CD8-positive, alpha-beta T cell (primary cell): ENCODE measurements at regions of chr6 and their contacts with region 1.

Region 1: DNA sequence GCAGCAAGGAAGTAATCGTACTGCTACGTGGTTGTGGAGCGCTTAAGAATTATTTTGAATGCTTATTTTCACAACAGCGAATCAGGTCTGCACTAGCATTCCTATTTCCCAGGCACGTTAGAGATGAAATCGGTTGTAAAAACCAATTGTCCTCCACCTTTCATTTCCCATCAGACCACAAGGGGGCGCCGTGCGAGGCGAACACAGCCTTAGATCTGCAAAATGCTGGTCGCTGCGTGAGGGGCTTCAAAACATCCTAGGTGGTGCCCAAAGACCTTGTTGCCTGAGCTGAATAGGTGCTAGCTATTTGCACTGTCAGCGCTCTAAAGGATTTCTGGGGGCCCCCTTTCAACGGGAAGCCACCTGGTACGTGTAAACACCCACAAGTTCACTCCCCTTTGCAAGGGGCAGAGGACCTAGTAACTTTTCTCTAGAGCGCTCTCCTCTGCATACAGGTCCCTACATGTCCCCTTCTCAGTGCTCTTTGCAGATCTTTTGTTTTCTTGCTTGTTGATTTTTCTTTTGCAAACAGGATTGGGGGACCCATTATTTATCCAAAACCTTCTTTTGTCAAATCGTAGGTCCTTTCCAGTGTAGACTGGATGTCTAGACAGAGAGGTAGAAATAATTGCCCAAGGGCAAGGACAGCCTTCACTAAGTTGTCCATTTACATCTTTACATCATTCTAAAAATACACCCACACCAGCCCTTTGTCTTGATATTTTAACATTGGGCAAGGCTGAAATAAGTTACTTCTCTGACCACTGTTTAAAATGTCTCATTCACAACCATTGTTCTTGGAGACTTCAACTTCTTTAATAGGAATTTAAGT is 59.8 kb downstream of the NEDD9 start:
- DNase-seq: peak; percentile 58 to 90 (median 77)
- ATAC-seq: peak; percentile 79
- H3K4me3 ChIP-seq: peak overlapping the region in 1 of 2 experiments; percentile 23
- H3K4me3 Mint-ChIP-seq: peak overlapping the region; percentile 44
- H3K27ac ChIP-seq: no peak overlapping the region
- H3K27ac Mint-ChIP-seq: peak overlapping the region; percentile 62
- H3K4me1 ChIP-seq: peaks cover 9% of the 10 kb centered on the region
- H3K4me1 Mint-ChIP-seq: peaks cover 11% of the 10 kb centered on the region
- H3K27me3 ChIP-seq: no peaks in the 10 kb centered on the region
- H3K27me3 Mint-ChIP-seq: no peaks in the 10 kb centered on the region
- CTCF ChIP-seq: peak; percentile 86

Region 2: DNA sequence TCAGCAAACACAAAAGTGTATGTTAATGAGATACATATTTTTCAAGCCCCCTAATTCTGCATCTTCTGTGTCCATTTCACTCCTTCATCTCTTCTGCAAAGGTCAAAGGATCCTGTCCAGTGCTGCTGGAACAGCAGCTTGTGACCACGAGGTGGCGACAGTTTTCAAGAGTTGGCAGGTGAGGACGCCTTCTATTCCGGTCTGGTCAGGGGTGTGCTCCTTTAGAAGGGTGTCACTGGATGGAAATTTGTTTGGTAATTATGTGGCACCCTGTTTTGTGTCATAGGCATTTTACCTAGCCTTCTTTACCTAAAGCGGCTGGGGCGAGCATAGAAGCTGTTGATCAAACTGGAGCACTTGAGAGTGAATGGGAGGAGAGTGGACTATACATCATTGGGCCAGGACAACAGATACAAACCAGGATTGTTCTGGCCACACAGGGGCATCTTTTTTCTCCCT is 28.3 kb before region 1 on chr6:
- CTCF ChIA-PET with region 1: interaction called, 14 read pairs
- POLR2A ChIA-PET with region 1: no interaction called
- intact Hi-C with region 1: loop called (anchors 1 to 2 kb)
- DNase-seq: peak; percentile 42 to 82 (median 74)
- ATAC-seq: peak; percentile 77
- H3K4me3 ChIP-seq: no peak overlapping the region
- H3K4me3 Mint-ChIP-seq: no peak overlapping the region
- H3K27ac ChIP-seq: no peak overlapping the region
- H3K27ac Mint-ChIP-seq: no peak overlapping the region
- H3K4me1 ChIP-seq: no peaks in the 10 kb centered on the region
- H3K4me1 Mint-ChIP-seq: no peaks in the 10 kb centered on the region
- H3K27me3 ChIP-seq: no peaks in the 10 kb centered on the region
- H3K27me3 Mint-ChIP-seq: no peaks in the 10 kb centered on the region
- CTCF ChIP-seq: peak; percentile 92

Region 3: DNA sequence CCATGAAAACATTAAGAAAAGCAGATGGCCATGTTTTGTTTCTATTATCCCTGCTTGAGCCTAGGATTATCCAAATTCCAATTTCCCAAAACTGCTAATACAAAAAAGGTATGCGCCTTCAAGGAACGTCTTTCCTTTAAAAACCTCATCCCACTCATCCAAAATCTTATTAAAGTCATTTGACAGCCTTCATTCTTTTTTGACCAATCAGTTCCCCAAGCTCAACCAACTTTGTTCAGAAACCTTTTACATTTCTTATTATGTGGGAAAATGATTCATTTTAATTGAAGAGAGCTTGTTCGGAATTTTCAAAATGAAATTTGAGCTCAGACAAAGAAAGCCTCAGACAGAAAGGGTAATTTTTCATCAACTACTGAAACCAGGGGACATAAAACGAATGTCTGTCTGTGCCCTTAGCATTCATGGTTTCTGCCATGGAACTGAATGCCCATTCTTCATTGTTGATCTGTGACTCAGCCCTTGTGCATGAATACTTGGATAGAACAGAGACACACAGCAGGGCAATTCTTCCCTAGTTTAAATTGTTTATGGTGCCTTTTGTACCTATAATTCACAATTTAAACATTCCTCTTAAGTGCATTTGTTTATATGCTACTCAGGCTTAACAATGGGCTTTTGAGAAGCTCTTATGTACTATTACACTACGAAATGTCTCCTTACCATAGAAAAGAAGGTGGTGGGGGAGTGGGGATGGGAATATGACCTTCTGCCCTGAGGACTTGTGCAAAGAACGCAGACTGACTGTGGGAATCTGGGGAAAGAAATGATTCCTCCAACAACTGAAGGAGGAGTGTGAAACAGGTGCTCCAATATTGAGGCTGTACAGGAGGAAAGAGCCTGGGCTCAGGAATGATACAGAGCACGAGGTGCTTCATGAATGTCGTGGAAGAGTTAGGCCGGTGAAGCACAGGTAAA is 11.4 kb before region 1 on chr6:
- CTCF ChIA-PET with region 1: interaction called, 11 read pairs
- POLR2A ChIA-PET with region 1: no interaction called
- intact Hi-C with region 1: no loop called
- DNase-seq: no peak
- ATAC-seq: no peak
- H3K4me3 ChIP-seq: no peak overlapping the region
- H3K4me3 Mint-ChIP-seq: no peak overlapping the region
- H3K27ac ChIP-seq: no peak overlapping the region
- H3K27ac Mint-ChIP-seq: no peak overlapping the region
- H3K4me1 ChIP-seq: no peaks in the 10 kb centered on the region
- H3K4me1 Mint-ChIP-seq: peaks cover 3% of the 10 kb centered on the region
- H3K27me3 ChIP-seq: no peaks in the 10 kb centered on the region
- H3K27me3 Mint-ChIP-seq: no peaks in the 10 kb centered on the region
- CTCF ChIP-seq: no peak

Region 4: GRCh38 chr6:11188161-11188915 is 15.6 kb after region 1 on chr6:
- CTCF ChIA-PET with region 1: interaction called, 22 read pairs
- POLR2A ChIA-PET with region 1: no interaction called
- intact Hi-C with region 1: no loop called
- DNase-seq: no peak
- ATAC-seq: no peak
- H3K4me3 ChIP-seq: no peak overlapping the region
- H3K4me3 Mint-ChIP-seq: no peak overlapping the region
- H3K27ac ChIP-seq: no peak overlapping the region
- H3K27ac Mint-ChIP-seq: peak overlapping the region; percentile 29
- H3K4me1 ChIP-seq: no peaks in the 10 kb centered on the region
- H3K4me1 Mint-ChIP-seq: no peaks in the 10 kb centered on the region
- H3K27me3 ChIP-seq: no peaks in the 10 kb centered on the region
- H3K27me3 Mint-ChIP-seq: no peaks in the 10 kb centered on the region
- CTCF ChIP-seq: no peak

Region 5: DNA sequence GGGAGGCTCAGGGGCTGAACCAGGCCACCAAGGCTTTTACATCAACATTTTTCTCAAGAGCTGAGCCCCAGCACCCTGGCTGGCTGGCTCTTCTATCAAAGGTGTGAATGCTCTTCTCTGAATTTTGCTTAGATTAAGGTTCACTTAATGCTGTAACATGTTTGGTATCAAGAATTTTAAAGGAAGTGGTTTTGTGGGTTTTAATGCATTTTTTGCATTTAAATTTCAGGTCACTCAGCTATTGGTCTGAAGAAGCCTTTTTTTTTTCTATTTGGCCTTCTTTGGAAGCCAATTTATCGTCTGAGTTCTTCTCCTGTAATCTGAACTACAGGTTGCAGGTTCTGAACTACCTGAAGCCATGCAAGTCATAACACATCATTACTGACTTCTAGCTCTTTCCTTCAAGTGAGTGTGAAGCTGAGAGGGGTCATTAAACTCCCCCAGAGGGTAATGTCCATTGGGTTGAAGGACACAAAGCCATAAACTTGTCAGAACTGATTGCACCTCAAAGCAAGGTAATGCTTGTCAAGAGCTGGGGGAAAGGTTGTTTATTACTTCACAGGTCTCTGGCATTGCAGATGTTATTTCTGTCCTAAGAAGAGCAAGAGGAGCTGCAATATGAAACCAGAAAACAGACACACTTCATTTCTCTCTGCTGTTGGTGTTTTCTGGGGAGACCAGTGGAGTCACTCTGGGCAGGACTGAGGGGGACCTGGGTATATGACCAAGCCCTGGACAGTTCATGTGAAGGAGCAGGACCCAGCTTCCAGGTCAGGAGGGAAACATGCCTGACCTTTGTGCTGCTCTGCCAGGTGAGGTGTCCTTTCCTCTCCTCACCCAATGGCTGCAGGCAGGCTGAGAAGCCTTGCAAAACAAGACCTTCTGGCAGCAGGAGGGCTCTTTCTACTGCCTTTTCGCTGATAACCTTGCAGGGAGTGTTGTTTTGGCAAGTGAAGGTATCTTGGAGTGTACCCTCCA is 85.8 kb after region 1 on chr6:
- CTCF ChIA-PET with region 1: interaction called, 4 read pairs
- POLR2A ChIA-PET with region 1: no interaction called
- intact Hi-C with region 1: loop called in 1 of 2 experiments (anchors 5 kb)
- DNase-seq: peak in 4 of 9 experiments; percentile 14 to 80 (median 57)
- ATAC-seq: peak; percentile 80
- H3K4me3 ChIP-seq: no peak overlapping the region
- H3K4me3 Mint-ChIP-seq: peak overlapping the region; percentile 29
- H3K27ac ChIP-seq: peak overlapping the region in 1 of 2 experiments; percentile 73
- H3K27ac Mint-ChIP-seq: peak overlapping the region; percentile 84
- H3K4me1 ChIP-seq: peaks cover 32% of the 10 kb centered on the region
- H3K4me1 Mint-ChIP-seq: peaks cover 67% of the 10 kb centered on the region
- H3K27me3 ChIP-seq: no peaks in the 10 kb centered on the region
- H3K27me3 Mint-ChIP-seq: no peaks in the 10 kb centered on the region
- CTCF ChIP-seq: no peak

Region 6: GRCh38 chr6:11414176-11414963 is 241.7 kb after region 1 on chr6:
- CTCF ChIA-PET with region 1: interaction called, 3 read pairs
- POLR2A ChIA-PET with region 1: no interaction called
- intact Hi-C with region 1: loop called in 1 of 2 experiments (anchors 5 kb)
- DNase-seq: peak in 3 of 9 experiments; percentile 31 to 66 (median 55)
- ATAC-seq: peak; percentile 79
- H3K4me3 ChIP-seq: no peak overlapping the region
- H3K4me3 Mint-ChIP-seq: no peak overlapping the region
- H3K27ac ChIP-seq: no peak overlapping the region
- H3K27ac Mint-ChIP-seq: no peak overlapping the region
- H3K4me1 ChIP-seq: no peaks in the 10 kb centered on the region
- H3K4me1 Mint-ChIP-seq: peaks cover 7% of the 10 kb centered on the region
- H3K27me3 ChIP-seq: no peaks in the 10 kb centered on the region
- H3K27me3 Mint-ChIP-seq: no peaks in the 10 kb centered on the region
- CTCF ChIP-seq: no peak

Region 7: GRCh38 chr6:11575408-11576033 is 402.8 kb after region 1 on chr6:
- CTCF ChIA-PET with region 1: interaction called, 16 read pairs
- POLR2A ChIA-PET with region 1: no interaction called
- intact Hi-C with region 1: loop called (anchors 2 to 10 kb)
- DNase-seq: peak in 8 of 9 experiments; percentile 5 to 67 (median 42)
- ATAC-seq: peak; percentile 88
- H3K4me3 ChIP-seq: no peak overlapping the region
- H3K4me3 Mint-ChIP-seq: no peak overlapping the region
- H3K27ac ChIP-seq: no peak overlapping the region
- H3K27ac Mint-ChIP-seq: no peak overlapping the region
- H3K4me1 ChIP-seq: no peaks in the 10 kb centered on the region
- H3K4me1 Mint-ChIP-seq: no peaks in the 10 kb centered on the region
- H3K27me3 ChIP-seq: no peaks in the 10 kb centered on the region
- H3K27me3 Mint-ChIP-seq: no peaks in the 10 kb centered on the region
- CTCF ChIP-seq: peak; percentile 85